A673 (cell line): ENCODE measurements at regions of chr4 and their contacts with region 1.

Region 1: DNA sequence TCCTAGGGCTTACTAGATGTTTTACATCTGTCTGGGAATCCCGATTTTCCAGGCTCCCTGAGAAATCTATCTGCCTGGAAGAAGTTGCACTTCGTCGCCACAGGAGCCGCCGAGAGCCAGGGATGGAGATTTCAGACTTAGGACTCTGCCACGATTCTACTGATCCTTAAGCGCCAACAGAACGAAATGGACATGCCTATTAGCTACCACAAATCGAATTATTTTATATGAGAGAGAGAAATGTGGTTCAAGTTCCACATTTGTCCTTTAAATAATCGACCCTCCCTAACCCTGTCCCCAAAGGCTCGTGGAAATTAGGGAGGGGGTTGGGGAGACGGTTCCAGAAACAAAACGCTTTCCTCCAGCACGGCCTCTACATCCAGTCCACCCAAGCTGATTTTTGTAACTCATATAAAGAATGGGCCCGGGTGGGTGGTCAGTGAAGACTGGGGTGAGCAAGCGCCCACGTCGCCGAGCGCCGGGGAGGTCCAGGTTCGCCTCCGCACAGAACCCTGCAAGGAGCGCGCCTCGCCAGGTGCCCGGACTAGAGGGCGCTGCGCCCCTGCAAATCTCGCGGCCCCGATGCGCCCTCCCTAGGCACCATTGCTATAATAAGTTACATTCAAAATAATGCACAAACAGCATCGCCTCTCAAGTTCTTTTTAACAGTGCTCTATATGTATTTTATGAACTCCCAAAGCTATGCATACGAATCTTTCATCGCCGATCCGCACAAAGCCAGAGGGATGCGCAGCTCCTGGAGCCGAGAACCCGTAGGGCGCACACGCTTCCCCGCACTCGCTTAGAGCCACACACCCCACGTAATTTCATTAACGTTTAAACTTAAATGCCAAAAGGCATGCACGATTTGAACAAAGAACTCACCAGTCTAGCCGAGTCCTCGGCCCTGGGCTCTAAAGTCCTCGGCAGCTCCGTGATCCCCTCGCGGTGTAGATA is 2.1 kb upstream of the FAT1 start:
- DNase-seq: peak; percentile 89
- H3K4me3 ChIP-seq: peak overlapping the region; percentile 81
- H3K27ac ChIP-seq: peak overlapping the region; percentile 51
- H3K4me1 ChIP-seq: peaks cover 18% of the 10 kb centered on the region
- H3K27me3 ChIP-seq: no peaks in the 10 kb centered on the region
- CTCF ChIP-seq: peak; percentile 91

Region 2: GRCh38 chr4:186472948-186473347 is 252.8 kb before region 1 on chr4:
- CTCF ChIA-PET with region 1: no interaction called
- POLR2A ChIA-PET with region 1: no interaction called
- intact Hi-C with region 1: loop called (anchors 5 kb)
- DNase-seq: peak; percentile 58
- H3K4me3 ChIP-seq: no peak overlapping the region
- H3K27ac ChIP-seq: no peak overlapping the region
- H3K4me1 ChIP-seq: no peaks in the 10 kb centered on the region
- H3K27me3 ChIP-seq: no peaks in the 10 kb centered on the region
- CTCF ChIP-seq: peak; percentile 85

Region 3: DNA sequence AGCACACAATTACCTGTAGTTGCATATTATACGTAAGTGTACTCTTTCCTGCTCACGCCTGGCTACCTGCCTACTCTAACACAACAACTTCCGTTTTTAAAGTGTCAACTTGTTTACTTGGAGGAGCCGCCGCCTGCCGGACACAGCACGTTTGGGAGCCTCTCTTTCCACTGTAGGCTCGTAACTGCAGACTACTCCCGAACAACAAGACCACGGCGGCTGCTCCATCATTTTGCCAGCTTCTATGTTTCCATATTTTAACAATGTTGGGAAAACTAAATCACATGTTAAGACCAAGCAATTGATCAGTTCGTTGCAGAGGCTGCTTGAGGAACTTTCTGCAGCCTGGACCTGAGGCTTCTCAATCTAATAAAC is 171.2 kb before region 1 on chr4:
- CTCF ChIA-PET with region 1: no interaction called
- POLR2A ChIA-PET with region 1: no interaction called
- intact Hi-C with region 1: no loop called
- DNase-seq: peak; percentile 68
- H3K4me3 ChIP-seq: peak overlapping the region; percentile 61
- H3K27ac ChIP-seq: no peak overlapping the region
- H3K4me1 ChIP-seq: peaks cover 6% of the 10 kb centered on the region
- H3K27me3 ChIP-seq: peaks cover 5% of the 10 kb centered on the region
- CTCF ChIP-seq: peak; percentile 52

Region 4: DNA sequence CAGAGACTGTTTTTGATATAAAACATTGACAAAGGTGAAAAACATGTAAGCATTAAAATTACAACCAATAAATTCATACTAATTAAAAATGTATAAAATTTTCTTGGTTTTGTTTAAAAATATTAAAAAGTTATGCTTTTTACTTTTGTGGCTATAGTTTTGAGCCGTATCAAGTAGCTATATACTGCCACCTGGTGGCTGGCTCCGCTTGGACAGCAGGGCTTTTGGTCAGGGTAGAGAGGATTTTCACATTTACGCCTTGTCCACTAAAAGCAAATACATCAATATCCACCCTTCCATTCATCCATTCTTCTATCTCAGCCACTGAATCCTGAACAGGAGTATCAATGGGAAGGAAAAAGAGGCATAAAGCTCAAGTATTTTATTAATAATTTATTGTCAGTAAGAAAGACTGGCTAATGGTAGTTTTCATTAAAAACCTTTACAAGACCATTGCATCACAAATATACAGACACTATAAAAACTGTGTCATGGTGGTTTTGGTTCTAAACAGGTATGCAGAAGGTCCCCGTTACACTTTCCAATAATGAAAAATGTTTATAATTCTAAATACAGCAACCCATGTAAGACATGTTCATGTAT is 138.2 kb before region 1 on chr4:
- CTCF ChIA-PET with region 1: no interaction called
- POLR2A ChIA-PET with region 1: no interaction called
- intact Hi-C with region 1: no loop called
- DNase-seq: peak; percentile 58
- H3K4me3 ChIP-seq: no peak overlapping the region
- H3K27ac ChIP-seq: no peak overlapping the region
- H3K4me1 ChIP-seq: no peaks in the 10 kb centered on the region
- H3K27me3 ChIP-seq: no peaks in the 10 kb centered on the region
- CTCF ChIP-seq: peak; percentile 94

Region 5: DNA sequence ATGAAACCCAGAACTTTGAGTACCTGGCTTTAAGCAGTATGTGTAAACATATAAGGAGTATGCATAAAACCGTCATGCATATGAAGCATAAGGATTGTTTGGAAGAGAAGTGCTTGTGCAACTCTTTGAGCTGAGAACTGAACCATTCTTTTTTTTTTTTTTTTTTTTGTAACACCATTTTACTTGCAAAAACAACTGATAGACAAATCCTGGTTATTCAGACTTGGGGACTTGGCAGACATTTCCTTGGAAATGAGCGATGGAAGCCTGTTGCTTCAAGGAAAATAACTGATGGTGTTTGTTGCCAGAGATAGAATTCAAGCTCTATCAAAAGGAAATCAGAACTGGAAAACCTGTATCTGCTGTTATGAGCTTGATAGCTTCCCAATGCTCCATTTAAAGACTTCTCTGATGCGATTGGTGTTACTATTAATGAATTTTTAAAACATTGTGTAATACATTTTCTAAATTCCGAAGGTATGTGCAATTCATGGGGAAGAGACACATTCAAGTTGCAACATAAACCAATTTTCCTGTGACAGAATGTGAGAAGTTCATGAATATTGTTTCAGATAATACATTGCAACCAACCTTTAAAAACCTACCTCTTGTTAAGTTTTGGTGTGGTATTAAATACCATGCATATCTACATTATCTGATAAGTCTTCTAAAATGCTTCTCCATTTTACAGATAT is 44.9 kb after region 1 on chr4:
- CTCF ChIA-PET with region 1: interaction called, 11 read pairs
- POLR2A ChIA-PET with region 1: no interaction called
- intact Hi-C with region 1: no loop called
- DNase-seq: no peak
- H3K4me3 ChIP-seq: no peak overlapping the region
- H3K27ac ChIP-seq: no peak overlapping the region
- H3K4me1 ChIP-seq: no peaks in the 10 kb centered on the region
- H3K27me3 ChIP-seq: peaks cover 4% of the 10 kb centered on the region
- CTCF ChIP-seq: no peak

Region 6: DNA sequence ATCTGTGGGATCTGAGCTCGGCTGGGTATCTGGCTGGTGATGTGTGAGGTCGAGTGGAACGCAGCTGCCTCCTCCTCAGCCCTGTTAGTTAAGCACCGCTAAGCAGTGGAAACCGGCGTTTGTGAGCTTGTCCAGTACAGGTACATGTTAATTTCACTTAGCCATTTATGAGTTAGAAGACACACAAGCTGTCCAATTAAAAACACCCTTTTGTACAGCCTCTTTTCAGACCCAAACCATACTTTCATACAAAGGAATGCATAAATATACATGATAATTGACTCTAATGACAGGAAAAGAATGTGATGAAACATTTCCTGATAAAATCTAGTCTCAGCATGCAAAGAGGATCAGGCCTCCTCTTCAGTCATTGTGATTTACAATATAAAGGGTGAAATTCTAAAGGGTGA is 161.5 kb after region 1 on chr4:
- CTCF ChIA-PET with region 1: no interaction called
- POLR2A ChIA-PET with region 1: no interaction called
- intact Hi-C with region 1: loop called (anchors 5 kb)
- DNase-seq: peak; percentile 97
- H3K4me3 ChIP-seq: no peak overlapping the region
- H3K27ac ChIP-seq: peak overlapping the region; percentile 65
- H3K4me1 ChIP-seq: peaks cover 31% of the 10 kb centered on the region
- H3K27me3 ChIP-seq: no peaks in the 10 kb centered on the region
- CTCF ChIP-seq: no peak

Region 7: GRCh38 chr4:186946682-186947294 is 221.0 kb after region 1 on chr4:
- CTCF ChIA-PET with region 1: no interaction called
- POLR2A ChIA-PET with region 1: no interaction called
- intact Hi-C with region 1: loop called (anchors 1 kb)
- DNase-seq: peak; percentile 61
- H3K4me3 ChIP-seq: no peak overlapping the region
- H3K27ac ChIP-seq: no peak overlapping the region
- H3K4me1 ChIP-seq: peaks cover 18% of the 10 kb centered on the region
- H3K27me3 ChIP-seq: peaks cover 10% of the 10 kb centered on the region
- CTCF ChIP-seq: peak; percentile 43; the same call in 1 of the 2 replicates

Region 8: DNA sequence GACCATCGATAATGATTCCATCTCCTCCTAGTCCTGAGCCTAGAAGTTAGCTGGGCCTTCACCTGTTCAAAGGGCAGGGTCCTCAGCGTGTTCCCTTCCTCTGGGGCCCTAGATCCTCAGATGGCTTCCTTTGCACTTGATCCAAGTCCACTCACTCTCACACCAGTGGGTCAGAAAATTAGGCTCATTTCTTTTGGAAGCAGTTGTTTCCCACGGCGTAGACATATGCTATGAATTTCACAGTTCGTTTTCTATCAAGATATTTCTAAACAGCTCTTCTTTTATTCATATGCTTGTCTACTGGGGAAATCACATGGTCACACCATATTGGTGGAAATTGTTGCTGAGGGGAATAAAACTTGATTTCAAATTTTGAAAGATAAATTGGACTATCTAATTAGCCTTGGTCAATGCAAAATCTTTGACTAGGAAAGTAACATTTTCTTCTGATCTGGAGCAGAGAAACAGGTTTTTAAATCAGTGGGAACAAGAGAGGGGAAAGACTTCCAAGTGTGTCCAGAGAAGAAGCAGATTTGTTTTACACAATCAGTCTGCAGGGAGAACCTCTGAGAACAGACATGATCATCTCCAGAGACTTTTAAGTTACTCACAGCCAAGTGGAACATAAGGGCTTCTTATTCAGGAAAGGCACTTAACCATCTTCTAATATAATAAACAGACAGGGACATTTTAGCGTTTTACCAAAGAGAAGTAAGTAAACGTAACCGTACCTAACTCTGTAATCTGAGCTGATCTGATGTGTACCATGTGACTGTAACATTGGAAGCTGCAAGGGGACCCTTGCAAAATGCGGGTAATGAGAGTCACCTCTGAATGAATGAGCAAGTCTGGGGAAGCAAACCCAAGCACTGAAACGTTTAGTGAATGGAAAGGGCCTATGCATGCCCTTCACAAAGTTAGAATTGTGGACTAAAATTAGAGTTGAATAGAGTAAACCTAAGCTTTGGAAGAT is 453.6 kb after region 1 on chr4:
- CTCF ChIA-PET with region 1: no interaction called
- POLR2A ChIA-PET with region 1: no interaction called
- intact Hi-C with region 1: loop called (anchors 10 kb)
- DNase-seq: no peak
- H3K4me3 ChIP-seq: no peak overlapping the region
- H3K27ac ChIP-seq: no peak overlapping the region
- H3K4me1 ChIP-seq: no peaks in the 10 kb centered on the region
- H3K27me3 ChIP-seq: peaks cover 97% of the 10 kb centered on the region
- CTCF ChIP-seq: no peak

Region 9: GRCh38 chr4:187227907-187228704 is 502.4 kb after region 1 on chr4:
- CTCF ChIA-PET with region 1: no interaction called
- POLR2A ChIA-PET with region 1: no interaction called
- intact Hi-C with region 1: no loop called
- DNase-seq: no peak
- H3K4me3 ChIP-seq: no peak overlapping the region
- H3K27ac ChIP-seq: no peak overlapping the region
- H3K4me1 ChIP-seq: no peaks in the 10 kb centered on the region
- H3K27me3 ChIP-seq: peaks cover 25% of the 10 kb centered on the region
- CTCF ChIP-seq: no peak